ENCODE measurements at regions of chr3 and their contacts with region 1.

Region 1: GRCh38 chr3:167102071-167102470 is 278.0 kb downstream of the ZBBX start:
- DNase-seq: peak; percentile 43
- ATAC-seq: peak; percentile 90
- H3K4me3 Mint-ChIP-seq: no peak overlapping the region
- H3K27ac Mint-ChIP-seq: no peak overlapping the region
- H3K4me1 Mint-ChIP-seq: no peaks in the 10 kb centered on the region
- H3K27me3 Mint-ChIP-seq: no peaks in the 10 kb centered on the region
- CTCF ChIP-seq: peak; percentile 41

Region 2: DNA sequence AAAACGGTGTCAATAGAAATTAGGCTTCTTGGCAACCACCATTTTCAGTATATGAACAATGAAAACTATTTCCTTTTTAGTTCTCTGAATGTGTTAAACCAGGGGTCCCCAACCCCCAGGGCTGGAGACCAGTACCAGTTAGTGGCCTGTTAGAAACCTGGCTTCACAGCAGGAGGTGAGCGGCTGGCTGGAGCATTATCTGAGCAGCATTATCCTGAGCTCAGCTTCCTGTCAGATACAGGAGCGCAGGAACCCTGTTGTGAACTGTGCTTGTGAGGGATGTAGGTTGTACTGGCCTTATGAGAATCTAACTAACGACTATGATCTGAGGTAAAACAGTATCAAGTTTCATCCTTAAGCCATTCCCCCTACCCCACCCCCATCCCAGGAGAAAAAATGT is 50.6 kb before region 1 on chr3:
- CTCF ChIA-PET with region 1: no interaction called
- POLR2A ChIA-PET with region 1: no interaction called
- DNase-seq: peak; percentile 53
- ATAC-seq: peak; percentile 87
- H3K4me3 Mint-ChIP-seq: no peak overlapping the region
- H3K27ac Mint-ChIP-seq: no peak overlapping the region
- H3K4me1 Mint-ChIP-seq: peaks cover 20% of the 10 kb centered on the region
- H3K27me3 Mint-ChIP-seq: no peaks in the 10 kb centered on the region
- CTCF ChIP-seq: no peak

Region 3: DNA sequence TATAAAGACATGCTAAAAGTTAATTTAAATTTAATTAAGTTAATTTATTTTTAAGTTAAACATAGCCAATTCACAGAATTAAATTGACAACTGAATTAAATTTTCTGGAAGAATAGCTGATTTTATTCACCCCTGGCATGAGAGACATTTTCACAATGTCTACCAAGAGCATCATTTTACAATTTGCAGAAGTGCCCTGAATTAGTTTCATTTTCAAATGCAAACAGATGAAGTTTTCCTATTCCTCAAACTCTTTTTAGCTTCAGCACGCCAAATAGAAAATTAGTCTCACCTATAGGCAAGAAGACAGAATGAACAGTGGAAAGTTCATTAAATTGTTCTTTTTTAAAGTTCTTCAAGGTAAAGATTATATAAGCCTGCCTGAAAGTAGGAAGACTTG is 18.8 kb after region 1 on chr3:
- CTCF ChIA-PET with region 1: no interaction called
- POLR2A ChIA-PET with region 1: no interaction called
- DNase-seq: no peak
- ATAC-seq: no peak
- H3K4me3 Mint-ChIP-seq: no peak overlapping the region
- H3K27ac Mint-ChIP-seq: no peak overlapping the region
- H3K4me1 Mint-ChIP-seq: peaks cover 3% of the 10 kb centered on the region; the same call in 1 of the 2 replicates
- H3K27me3 Mint-ChIP-seq: no peaks in the 10 kb centered on the region
- CTCF ChIP-seq: no peak

Region 4: DNA sequence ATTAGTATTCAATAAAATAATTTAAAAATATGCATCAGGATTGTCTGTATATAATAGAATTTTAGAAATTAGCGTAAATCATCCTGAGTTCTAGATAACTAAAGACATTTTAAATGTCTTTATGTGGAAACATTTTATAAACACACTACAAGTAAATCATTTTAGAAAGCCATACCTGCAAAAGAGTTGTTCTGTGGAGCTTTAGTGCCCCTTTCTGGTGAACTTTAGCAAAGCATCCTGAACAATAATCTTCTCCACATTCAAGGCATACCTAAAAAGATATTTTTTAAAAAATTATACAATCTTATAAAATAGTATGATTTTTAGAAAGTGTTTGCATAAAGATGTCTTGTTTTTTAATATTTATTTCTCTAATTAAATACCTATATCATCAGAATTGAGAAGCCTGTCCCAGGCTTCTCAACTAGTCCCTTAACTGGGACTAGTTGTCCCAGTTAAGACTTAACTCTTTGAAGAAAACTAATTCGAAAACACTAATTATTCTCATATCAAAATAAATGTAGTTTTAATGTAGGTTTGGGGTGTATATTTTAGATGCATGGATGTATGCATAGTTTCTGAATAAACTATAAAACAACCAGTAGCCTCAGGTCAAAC is 248.3 kb after region 1 on chr3:
- CTCF ChIA-PET with region 1: interaction called, 12 read pairs
- POLR2A ChIA-PET with region 1: no interaction called
- DNase-seq: no peak
- ATAC-seq: no peak
- H3K4me3 Mint-ChIP-seq: no peak overlapping the region
- H3K27ac Mint-ChIP-seq: no peak overlapping the region
- H3K4me1 Mint-ChIP-seq: no peaks in the 10 kb centered on the region
- H3K27me3 Mint-ChIP-seq: no peaks in the 10 kb centered on the region
- CTCF ChIP-seq: peak; percentile 47; the same call in 1 of the 2 replicates